Caco-2 (cell line): ENCODE measurements at regions of chr22 and their contacts with region 1.

Region 1: DNA sequence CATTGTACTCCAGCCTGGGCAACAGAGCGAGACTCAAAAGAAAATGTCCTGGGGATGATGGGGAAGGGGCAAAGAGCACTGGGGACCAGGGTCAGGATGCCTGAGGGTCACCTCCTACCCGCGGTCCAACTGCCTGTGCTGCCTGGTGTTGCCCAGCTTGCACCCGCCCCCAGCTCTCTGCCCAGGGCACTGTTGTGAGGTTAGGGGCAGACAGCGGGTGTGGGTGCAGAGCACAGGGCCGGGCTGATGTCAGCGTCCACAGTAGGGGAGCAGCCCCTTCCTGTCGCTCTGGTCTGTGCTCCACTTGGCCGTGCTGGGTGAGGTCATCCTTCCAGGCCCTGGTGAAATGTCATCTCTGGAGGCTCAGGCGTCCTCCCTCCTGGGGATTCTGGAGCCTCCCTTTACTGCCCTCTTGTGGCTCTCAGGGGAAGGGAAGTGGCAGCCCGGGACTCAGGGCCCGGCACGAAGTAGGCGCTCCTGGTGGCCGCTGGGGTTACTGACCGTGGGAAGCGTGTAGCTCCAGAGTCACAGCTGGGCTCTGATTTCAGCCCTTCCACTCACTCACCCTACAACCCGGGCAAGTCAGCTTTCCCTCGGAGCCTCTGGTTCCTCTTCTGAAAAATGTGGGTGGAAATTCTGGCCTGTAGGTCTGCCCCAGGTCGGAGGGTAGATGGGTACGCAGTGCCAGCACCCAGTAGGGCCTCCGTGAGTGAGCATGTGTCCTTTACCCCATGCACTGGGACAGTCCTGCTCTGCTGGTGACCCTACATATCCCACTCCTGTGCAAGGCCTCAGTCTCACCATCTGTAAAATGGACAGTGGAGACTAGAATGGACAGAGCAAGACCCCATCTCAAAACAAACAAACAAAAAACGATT is 17.3 kb upstream of the PRR5 start:
- DNase-seq: peak; percentile 93
- H3K4me3 ChIP-seq: no peak overlapping the region
- H3K4me3 Mint-ChIP-seq: no peak overlapping the region
- H3K27ac Mint-ChIP-seq: peak overlapping the region; percentile 92
- H3K4me1 ChIP-seq: peaks cover 57% of the 10 kb centered on the region
- H3K4me1 Mint-ChIP-seq: peaks cover 43% of the 10 kb centered on the region
- H3K27me3 ChIP-seq: no peaks in the 10 kb centered on the region
- H3K27me3 Mint-ChIP-seq: no peaks in the 10 kb centered on the region
- CTCF ChIP-seq: peak; percentile 95

Region 2: DNA sequence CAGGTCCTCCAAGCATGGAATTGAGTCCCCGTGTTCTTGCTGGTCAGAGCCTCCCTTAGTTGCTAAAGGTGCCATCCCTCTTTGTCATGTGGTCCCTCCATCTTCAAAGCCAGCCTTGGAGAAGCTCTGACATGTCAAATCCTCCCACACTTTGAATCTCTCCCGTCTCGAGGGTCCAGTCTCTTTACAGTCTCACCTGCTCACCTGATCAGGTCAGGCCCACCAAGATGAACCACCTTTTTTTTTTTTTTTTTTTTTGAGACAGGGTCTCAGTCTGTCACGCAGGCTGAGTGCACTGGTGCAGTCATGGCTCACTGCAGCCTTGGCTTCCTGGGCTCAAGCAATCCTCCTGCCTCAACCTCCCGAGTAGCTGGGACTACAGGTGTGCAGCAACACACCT is 83.0 kb before region 1 on chr22:
- CTCF ChIA-PET with region 1: interaction called, 11 read pairs
- POLR2A ChIA-PET with region 1: no interaction called
- intact Hi-C with region 1: no loop called
- DNase-seq: no peak
- H3K4me3 ChIP-seq: no peak overlapping the region
- H3K4me3 Mint-ChIP-seq: no peak overlapping the region
- H3K27ac Mint-ChIP-seq: no peak overlapping the region
- H3K4me1 ChIP-seq: no peaks in the 10 kb centered on the region
- H3K4me1 Mint-ChIP-seq: no peaks in the 10 kb centered on the region
- H3K27me3 ChIP-seq: no peaks in the 10 kb centered on the region; the same call in 1 of the 2 replicates
- H3K27me3 Mint-ChIP-seq: peaks cover 10% of the 10 kb centered on the region
- CTCF ChIP-seq: no peak

Region 3: DNA sequence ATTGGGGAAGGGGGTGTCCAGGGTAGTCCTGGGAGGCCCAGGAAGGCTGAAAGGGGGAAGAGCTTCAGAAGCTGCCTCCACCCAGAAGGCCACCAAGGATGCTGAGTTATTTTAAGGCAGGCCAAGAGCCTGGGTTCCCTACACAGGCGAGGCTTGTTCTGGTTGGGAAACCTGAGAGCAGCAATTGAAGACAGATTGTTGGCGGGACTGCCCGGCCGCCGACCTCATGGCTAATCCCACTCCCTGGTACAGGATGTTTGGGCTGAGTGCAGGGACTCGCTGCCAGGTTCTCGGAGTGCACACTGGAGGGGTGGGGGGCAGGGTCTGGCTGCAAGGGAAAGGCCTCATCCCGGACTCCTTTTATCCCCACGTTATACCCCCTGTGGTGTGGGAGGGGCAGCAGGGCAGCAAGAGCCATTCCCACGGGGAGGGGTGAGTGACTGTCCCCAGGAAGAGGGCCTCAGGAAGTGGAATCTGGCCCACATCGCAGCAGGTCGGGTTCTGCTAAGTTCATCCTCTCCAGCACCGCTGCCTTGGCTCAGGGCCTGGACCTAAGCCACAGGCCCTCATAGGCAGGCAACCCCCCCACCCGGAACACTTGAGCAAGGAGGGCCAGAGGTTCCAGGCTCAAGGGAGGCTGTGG is 26.3 kb before region 1 on chr22:
- CTCF ChIA-PET with region 1: no interaction called
- POLR2A ChIA-PET with region 1: no interaction called
- intact Hi-C with region 1: no loop called
- DNase-seq: no peak
- H3K4me3 ChIP-seq: no peak overlapping the region
- H3K4me3 Mint-ChIP-seq: no peak overlapping the region
- H3K27ac Mint-ChIP-seq: no peak overlapping the region
- H3K4me1 ChIP-seq: no peaks in the 10 kb centered on the region
- H3K4me1 Mint-ChIP-seq: no peaks in the 10 kb centered on the region
- H3K27me3 ChIP-seq: no peaks in the 10 kb centered on the region
- H3K27me3 Mint-ChIP-seq: no peaks in the 10 kb centered on the region
- CTCF ChIP-seq: no peak

Region 4: DNA sequence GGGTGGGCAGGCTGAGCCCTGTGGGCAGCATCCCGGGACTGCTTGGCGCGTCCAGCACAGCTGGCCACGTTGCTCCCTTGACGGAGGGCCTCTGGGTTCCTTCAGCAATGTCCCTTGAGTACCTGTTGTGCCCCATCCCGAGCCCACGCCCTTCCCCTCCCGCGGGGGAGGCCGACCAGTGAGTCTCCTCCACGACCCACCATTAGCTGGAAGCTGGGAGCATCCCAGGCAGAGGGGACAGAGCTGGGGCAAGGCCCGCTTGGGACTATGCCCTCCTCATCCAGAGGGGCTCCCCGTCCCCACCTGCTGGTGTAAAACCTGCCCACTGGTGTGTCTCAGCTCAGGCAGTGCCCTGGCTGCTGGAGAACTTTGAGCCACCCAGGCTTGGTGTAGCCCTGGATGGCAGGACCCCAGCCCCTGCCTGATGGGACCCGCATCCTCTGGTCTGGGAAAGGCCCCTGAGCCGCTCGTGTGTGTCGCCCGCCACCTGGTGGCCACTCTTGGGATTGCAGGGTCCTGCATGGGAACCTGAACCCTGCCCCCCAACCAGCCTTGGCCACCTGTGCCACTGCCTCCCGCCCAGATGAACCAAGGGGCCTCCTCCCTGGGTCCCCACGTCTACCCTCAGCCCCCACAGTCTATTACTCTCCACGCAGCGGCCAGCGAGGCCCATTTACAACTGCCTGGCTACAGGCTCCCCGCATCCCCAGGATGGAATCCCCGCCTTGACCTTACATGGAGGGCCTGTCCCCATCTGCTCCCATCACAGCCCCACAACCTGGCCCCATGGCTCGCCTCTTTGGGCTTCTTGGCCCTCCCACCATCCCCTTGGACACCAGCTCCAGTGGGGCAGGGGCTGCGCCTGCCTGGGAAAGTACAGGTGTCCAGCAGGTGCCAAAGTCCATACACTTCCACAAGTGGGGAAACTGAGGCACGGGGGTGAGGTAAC is 51.1 kb after region 1 on chr22:
- CTCF ChIA-PET with region 1: interaction called, 5 read pairs
- POLR2A ChIA-PET with region 1: interaction called, 3 read pairs
- intact Hi-C with region 1: loop called (anchors 5 kb)
- DNase-seq: peak; percentile 82 to 92
- H3K4me3 ChIP-seq: no peak overlapping the region
- H3K4me3 Mint-ChIP-seq: peak overlapping the region; percentile 14
- H3K27ac Mint-ChIP-seq: peak overlapping the region; percentile 84
- H3K4me1 ChIP-seq: peaks cover 71% of the 10 kb centered on the region
- H3K4me1 Mint-ChIP-seq: peaks cover 25% of the 10 kb centered on the region
- H3K27me3 ChIP-seq: no peaks in the 10 kb centered on the region
- H3K27me3 Mint-ChIP-seq: no peaks in the 10 kb centered on the region
- CTCF ChIP-seq: peak; percentile 93 to 95